Motor neuron (in vitro differentiated cells): ENCODE measurements at regions of chr9 and their contacts with region 1.

Region 1: GRCh38 chr9:90219548-90220118 is 423.0 kb downstream of the DIRAS2 start:
- ATAC-seq: peak in 1 of 8 experiments; percentile 55
- H3K4me3 ChIP-seq: no peak overlapping the region
- H3K27ac ChIP-seq: no peak overlapping the region
- H3K4me1 ChIP-seq: peaks cover 0 to 4% of the 10 kb centered on the region in 2 donors

Region 2: DNA sequence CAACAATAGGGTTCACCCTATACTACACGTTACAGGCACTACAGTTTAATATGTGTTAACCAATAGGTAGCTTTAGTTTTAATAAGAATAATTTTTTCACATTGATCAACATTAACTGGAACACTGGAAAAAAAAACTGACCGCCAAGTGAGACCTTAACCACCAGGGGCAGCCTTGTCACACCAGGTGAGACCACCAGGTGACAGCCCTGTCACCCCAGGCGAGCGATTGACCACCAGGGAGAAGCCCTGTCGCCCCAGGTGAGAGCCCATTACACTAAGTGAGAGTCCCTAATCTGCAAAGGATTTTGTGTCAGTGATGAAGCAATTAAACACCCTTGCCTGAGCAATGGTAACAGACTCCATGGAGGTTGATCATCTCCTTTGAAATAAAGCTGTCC is 506.6 kb after region 1 on chr9:
- in situ Hi-C with region 1: loop called in 1 of 9 experiments (anchors 25 kb)
- ATAC-seq: no peak
- H3K4me3 ChIP-seq: no peak overlapping the region
- H3K27ac ChIP-seq: no peak overlapping the region
- H3K4me1 ChIP-seq: peaks cover 0 to 3% of the 10 kb centered on the region in 2 donors